ENCODE measurements at regions of chr4 and their contacts with region 1.

Region 1: DNA sequence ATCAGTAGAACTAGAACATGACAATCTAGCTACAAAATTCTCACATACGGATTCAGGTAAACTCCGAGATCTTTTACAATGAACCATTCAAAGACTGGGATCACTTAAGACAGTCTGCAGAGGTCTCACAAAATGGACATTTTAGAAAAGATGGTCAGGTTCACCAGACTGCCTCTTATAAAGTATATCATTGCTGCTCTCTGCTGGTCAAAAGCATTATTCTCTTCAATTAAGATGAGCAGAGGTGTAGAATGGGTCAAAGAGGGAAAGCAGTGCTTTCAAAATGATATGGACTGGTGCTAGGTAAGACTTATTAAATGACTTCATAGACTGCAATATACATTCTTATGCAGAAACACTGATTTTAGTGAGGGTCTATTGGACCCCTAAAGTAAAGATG is 434.7 kb downstream of the PACRGL start:
- DNase-seq: peak in 1 of 2 experiments; percentile 11
- H3K4me3 ChIP-seq: no peak overlapping the region
- H3K4me3 Mint-ChIP-seq: no peak overlapping the region
- H3K27ac Mint-ChIP-seq: no peak overlapping the region
- H3K4me1 ChIP-seq: no peaks in the 10 kb centered on the region
- H3K4me1 Mint-ChIP-seq: no peaks in the 10 kb centered on the region
- H3K27me3 ChIP-seq: no peaks in the 10 kb centered on the region
- H3K27me3 Mint-ChIP-seq: peaks cover 12% of the 10 kb centered on the region
- CTCF ChIP-seq: peak in 1 of 2 experiments; percentile 9

Region 2: DNA sequence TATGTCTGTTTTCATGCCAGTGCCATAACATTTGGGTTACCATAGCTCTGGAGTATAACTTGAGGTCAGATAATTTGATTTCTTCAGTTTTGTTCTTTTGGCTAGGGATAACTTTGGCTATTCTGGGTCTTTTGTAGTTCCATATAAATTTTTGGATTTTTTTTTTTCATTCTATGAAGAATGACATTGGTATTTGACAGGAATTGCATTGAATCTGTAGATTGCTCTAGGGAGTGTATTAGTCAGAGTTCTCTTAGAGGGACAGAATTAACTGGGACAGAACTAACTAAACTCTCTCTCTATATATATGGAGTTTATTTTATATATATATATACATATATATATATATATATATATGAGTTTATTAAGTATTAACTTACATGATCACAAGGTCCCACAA is 915.5 kb before region 1 on chr4:
- CTCF ChIA-PET with region 1: no interaction called
- POLR2A ChIA-PET with region 1: no interaction called
- intact Hi-C with region 1: no loop called
- DNase-seq: no peak
- H3K4me3 ChIP-seq: no peak overlapping the region
- H3K4me3 Mint-ChIP-seq: no peak overlapping the region
- H3K27ac Mint-ChIP-seq: no peak overlapping the region
- H3K4me1 ChIP-seq: no peaks in the 10 kb centered on the region
- H3K4me1 Mint-ChIP-seq: no peaks in the 10 kb centered on the region
- H3K27me3 ChIP-seq: no peaks in the 10 kb centered on the region
- H3K27me3 Mint-ChIP-seq: peaks cover 3% of the 10 kb centered on the region
- CTCF ChIP-seq: no peak

Region 3: DNA sequence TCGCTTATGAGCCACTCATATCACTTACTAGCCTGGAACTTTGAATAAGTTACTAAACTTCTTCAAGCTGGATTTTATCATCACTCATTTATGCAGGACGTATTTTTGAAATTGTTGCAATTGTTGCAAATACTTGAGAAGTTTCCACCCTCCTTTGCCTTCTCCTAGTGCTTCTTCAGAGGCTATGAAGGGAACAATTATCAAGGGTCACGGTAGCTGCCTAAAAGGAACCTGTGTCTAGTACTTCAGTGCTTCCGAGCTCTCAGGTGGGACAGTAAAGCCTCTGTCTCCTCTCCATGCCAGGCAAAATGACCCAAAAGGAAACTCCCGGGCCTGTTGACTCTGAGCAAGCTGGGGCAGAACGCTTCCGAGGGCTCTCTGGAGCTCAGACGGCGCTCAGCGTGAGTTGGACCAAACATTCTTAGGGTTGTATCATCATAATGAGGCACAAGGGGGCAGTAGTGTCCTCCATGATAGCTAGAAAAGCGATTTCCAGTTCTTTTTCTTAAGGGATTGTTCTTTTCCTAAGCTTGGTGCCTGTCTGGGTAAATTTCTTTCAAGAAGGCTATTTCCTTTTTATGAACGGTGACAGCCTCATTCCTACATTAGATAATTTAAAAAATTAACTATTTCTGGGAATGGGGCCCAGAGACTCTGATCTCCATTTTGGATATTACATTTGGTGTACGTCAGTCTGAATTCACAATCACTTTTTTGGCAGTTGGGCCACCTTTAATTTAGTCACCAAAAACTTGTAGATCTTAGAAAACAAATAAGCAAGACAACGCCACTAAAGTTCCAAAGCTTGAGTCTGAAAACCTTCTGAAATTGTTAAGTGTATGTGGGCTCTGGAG is 361.6 kb before region 1 on chr4:
- CTCF ChIA-PET with region 1: no interaction called
- POLR2A ChIA-PET with region 1: no interaction called
- intact Hi-C with region 1: loop called (anchors 1 kb)
- DNase-seq: peak in 1 of 2 experiments; percentile 55
- H3K4me3 ChIP-seq: no peak overlapping the region
- H3K4me3 Mint-ChIP-seq: no peak overlapping the region
- H3K27ac Mint-ChIP-seq: no peak overlapping the region
- H3K4me1 ChIP-seq: no peaks in the 10 kb centered on the region
- H3K4me1 Mint-ChIP-seq: no peaks in the 10 kb centered on the region
- H3K27me3 ChIP-seq: no peaks in the 10 kb centered on the region
- H3K27me3 Mint-ChIP-seq: no peaks in the 10 kb centered on the region
- CTCF ChIP-seq: peak; percentile 48 to 51

Region 4: GRCh38 chr4:21535898-21536297 is 400.9 kb after region 1 on chr4:
- CTCF ChIA-PET with region 1: no interaction called
- POLR2A ChIA-PET with region 1: no interaction called
- intact Hi-C with region 1: no loop called
- DNase-seq: no peak
- H3K4me3 ChIP-seq: no peak overlapping the region
- H3K4me3 Mint-ChIP-seq: no peak overlapping the region
- H3K27ac Mint-ChIP-seq: no peak overlapping the region
- H3K4me1 ChIP-seq: no peaks in the 10 kb centered on the region
- H3K4me1 Mint-ChIP-seq: no peaks in the 10 kb centered on the region
- H3K27me3 ChIP-seq: no peaks in the 10 kb centered on the region
- H3K27me3 Mint-ChIP-seq: no peaks in the 10 kb centered on the region
- CTCF ChIP-seq: no peak

Measured in Caco-2 (cell line).